T-cell (primary cell): ENCODE measurements at regions of chr2 and their contacts with region 1.

Region 1: GRCh38 chr2:205703471-205704126 is 21.3 kb downstream of the NRP2 start:
- DNase-seq: no peak
- ATAC-seq: no peak
- H3K4me3 ChIP-seq: no peak overlapping the region
- H3K4me3 Mint-ChIP-seq: no peak overlapping the region
- H3K27ac ChIP-seq: no peak overlapping the region
- H3K27ac Mint-ChIP-seq: no peak overlapping the region
- H3K4me1 ChIP-seq: peaks cover 0 to 12% of the 10 kb centered on the region in 2 experiments
- H3K4me1 Mint-ChIP-seq: peaks cover 14 to 17% (median 16%) of the 10 kb centered on the region in 3 donors
- H3K27me3 ChIP-seq: peaks cover 0 to 3% of the 10 kb centered on the region in 2 experiments
- H3K27me3 Mint-ChIP-seq: peaks cover 0 to 2% of the 10 kb centered on the region in 2 donors

Region 2: DNA sequence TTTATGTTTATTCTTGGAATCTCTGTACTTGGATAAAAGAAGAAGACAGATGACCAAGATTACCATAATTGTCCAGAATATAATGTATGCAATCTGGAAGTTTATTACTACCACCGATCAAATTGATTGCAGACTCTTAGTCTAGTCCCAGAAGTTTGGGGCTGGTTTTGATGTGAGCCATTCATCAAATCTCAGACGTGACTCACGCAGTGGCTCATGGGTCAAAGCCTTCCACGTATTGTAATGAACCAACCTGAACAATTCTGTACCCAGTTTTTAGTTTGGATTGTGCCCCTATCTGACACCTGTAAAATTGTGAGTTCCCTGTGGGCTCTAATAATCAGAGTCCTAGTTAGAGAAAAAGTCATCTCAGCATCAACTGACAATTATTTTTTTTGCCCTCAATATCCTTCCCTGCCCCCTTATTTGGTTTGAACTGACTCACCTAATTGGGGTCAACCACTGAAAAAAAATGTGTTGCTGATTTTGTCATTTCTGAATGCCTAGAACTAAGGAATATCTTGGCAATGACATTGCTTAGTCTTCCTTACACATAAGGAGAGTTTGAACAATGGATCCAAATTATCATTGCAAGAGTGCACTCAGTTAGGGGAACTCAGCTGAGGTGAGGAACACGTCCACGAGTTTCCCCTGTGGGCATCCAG is 240.8 kb before region 1 on chr2:
- CTCF ChIA-PET with region 1: no interaction called
- POLR2A ChIA-PET with region 1: no interaction called
- DNase-seq: no peak
- ATAC-seq: no peak
- H3K4me3 ChIP-seq: no peak overlapping the region
- H3K4me3 Mint-ChIP-seq: no peak overlapping the region
- H3K27ac ChIP-seq: no peak overlapping the region
- H3K27ac Mint-ChIP-seq: no peak overlapping the region
- H3K4me1 ChIP-seq: no peaks in the 10 kb centered on the region
- H3K4me1 Mint-ChIP-seq: no peaks in the 10 kb centered on the region
- H3K27me3 ChIP-seq: no peaks in the 10 kb centered on the region
- H3K27me3 Mint-ChIP-seq: peaks cover 3 to 9% of the 10 kb centered on the region in 2 donors

Region 3: DNA sequence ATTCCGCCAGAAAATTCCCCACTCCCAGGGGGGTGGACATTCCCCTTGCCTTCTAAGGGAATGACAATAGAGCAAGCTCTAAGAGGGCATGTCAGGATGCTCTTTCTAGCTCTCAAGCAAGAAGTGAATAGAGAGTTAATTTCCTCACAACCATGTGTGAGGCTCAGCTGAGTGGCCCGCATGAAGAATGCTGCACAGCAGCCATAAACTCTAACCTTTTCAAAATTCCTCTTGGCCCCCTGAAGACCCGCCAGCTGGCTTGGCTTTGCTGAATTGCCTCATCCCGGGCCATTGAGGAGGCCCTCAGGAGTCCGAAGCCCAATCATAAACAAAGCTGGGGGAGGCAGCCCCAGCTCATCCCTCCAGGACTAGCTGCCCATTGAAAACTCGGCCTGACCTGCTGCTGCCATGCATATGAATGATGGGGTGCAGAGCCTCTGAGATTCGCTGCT is 16.9 kb after region 1 on chr2:
- CTCF ChIA-PET with region 1: interaction called in 1 of 2 experiments, 6 read pairs
- POLR2A ChIA-PET with region 1: interaction called in 1 of 2 experiments, 11 read pairs
- DNase-seq: no peak
- ATAC-seq: no peak
- H3K4me3 ChIP-seq: no peak overlapping the region
- H3K4me3 Mint-ChIP-seq: no peak overlapping the region
- H3K27ac ChIP-seq: no peak overlapping the region
- H3K27ac Mint-ChIP-seq: no peak overlapping the region
- H3K4me1 ChIP-seq: no peaks in the 10 kb centered on the region
- H3K4me1 Mint-ChIP-seq: no peaks in the 10 kb centered on the region
- H3K27me3 ChIP-seq: no peaks in the 10 kb centered on the region
- H3K27me3 Mint-ChIP-seq: peaks cover 4 to 9% of the 10 kb centered on the region in 2 donors